Dendritic cell treated with granulocyte-macrophage colony-stimulating factor and Interleukin-4, amounts not matched to agents 40 ng/mL and 50 ng/mL, for 4 days (primary cell): ENCODE measurements at regions of chr12 and their contacts with region 1.

Region 1: DNA sequence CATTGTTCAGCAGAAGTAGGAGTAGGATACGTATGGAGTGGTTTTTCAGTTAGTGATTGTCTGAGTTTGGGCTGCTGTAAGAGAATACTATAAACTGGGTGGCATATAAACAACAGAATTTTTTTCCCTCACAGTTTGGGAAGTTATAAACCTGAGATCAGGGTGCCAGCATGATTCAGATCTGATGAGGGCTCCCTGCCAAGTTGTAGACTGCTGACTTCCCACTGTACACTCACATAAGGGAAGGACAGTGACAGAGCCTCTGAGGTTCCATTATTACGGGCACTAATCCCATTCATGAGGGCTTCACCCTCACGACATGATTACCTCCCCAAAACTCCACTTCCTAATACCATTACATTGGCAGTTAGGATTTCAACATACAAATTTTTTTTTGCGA is 50.7 kb downstream of the ACSM4 start:
- H3K4me3 Mint-ChIP-seq: no peak overlapping the region
- H3K27ac Mint-ChIP-seq: no peak overlapping the region
- H3K4me1 Mint-ChIP-seq: peaks cover 6% of the 10 kb centered on the region
- H3K27me3 Mint-ChIP-seq: peaks cover 3% of the 10 kb centered on the region

Region 2: GRCh38 chr12:7229741-7230140 is 124.8 kb before region 1 on chr12:
- intact Hi-C with region 1: loop called (anchors 10 kb)
- H3K4me3 Mint-ChIP-seq: no peak overlapping the region
- H3K27ac Mint-ChIP-seq: no peak overlapping the region
- H3K4me1 Mint-ChIP-seq: no peaks in the 10 kb centered on the region
- H3K27me3 Mint-ChIP-seq: peaks cover 5% of the 10 kb centered on the region

Region 3: DNA sequence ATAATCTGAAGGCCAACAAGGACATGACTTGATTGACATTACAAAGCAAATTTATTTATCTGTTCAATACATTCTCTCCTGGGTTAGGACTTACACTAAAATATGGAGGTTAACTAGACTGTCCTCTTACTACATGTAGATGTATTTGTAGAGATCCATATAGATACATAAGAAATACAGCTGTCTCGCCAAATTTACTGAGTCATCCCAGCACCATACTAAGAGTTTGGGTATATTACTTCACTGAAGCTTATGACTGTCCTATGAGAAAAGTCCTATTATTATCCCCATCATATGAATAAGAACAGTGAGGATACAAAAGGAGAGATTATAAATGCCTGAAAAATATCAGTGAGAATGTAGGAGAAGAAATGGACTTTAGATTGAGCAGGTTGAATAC is 95.5 kb before region 1 on chr12:
- intact Hi-C with region 1: no loop called
- H3K4me3 Mint-ChIP-seq: no peak overlapping the region
- H3K27ac Mint-ChIP-seq: no peak overlapping the region
- H3K4me1 Mint-ChIP-seq: no peaks in the 10 kb centered on the region
- H3K27me3 Mint-ChIP-seq: no peaks in the 10 kb centered on the region

Region 4: GRCh38 chr12:7369274-7369729 is 14.8 kb after region 1 on chr12:
- intact Hi-C with region 1: no loop called
- H3K4me3 Mint-ChIP-seq: no peak overlapping the region
- H3K27ac Mint-ChIP-seq: no peak overlapping the region
- H3K4me1 Mint-ChIP-seq: peaks cover 6% of the 10 kb centered on the region
- H3K27me3 Mint-ChIP-seq: peaks cover 7% of the 10 kb centered on the region